ENCODE measurements at regions of chr4 and their contacts with region 1.

Region 1: DNA sequence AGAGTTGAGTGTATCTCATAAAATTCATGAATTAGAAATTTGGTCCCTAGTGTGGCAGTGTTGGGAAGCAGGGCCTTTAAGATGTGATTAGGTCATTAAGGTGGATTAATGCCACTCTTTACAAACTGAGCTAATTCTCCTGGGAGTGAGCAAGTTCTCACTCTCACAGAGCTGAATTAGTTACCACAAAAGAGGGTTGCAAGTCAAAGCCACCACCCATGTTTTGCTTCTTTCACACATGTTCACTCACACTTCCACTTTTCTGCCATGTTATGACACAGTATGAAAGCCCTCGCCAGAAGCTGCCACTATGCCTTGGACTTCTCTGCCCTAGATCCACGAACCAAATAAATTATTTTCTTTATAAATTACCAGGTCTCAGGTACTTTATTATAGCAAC is 332.1 kb downstream of the ARAP2 start:
- DNase-seq: peak; percentile 52
- ATAC-seq: peak; percentile 97
- H3K4me3 ChIP-seq: no peak overlapping the region
- H3K27ac ChIP-seq: no peak overlapping the region
- H3K4me1 ChIP-seq: no peaks in the 10 kb centered on the region
- H3K27me3 ChIP-seq: no peaks in the 10 kb centered on the region
- CTCF ChIP-seq: no peak
- EP300 ChIP-seq: peak in 1 of 2 experiments; percentile 64; a peak in 2 of 4 replicates
- POLR2A ChIP-seq: no peak
- RAD21 ChIP-seq: no peak

Region 2: GRCh38 chr4:35725131-35725530 is 187.0 kb before region 1 on chr4:
- CTCF ChIA-PET with region 1: interaction called, 6 read pairs
- POLR2A ChIA-PET with region 1: no interaction called
- RAD21 ChIA-PET with region 1: interaction called, 6 read pairs
- SMC1A ChIA-PET with region 1: interaction called, 8 read pairs
- in situ Hi-C with region 1: no loop called
- intact Hi-C with region 1: loop called (anchors 5 kb)
- DNase-seq: no peak
- ATAC-seq: peak; percentile 72
- H3K4me3 ChIP-seq: no peak overlapping the region
- H3K27ac ChIP-seq: no peak overlapping the region
- H3K4me1 ChIP-seq: no peaks in the 10 kb centered on the region
- H3K27me3 ChIP-seq: no peaks in the 10 kb centered on the region
- CTCF ChIP-seq: peak; percentile 14 to 39 (median 24); a peak in 3 of 6 replicates
- EP300 ChIP-seq: no peak
- POLR2A ChIP-seq: no peak
- RAD21 ChIP-seq: no peak

Region 3: DNA sequence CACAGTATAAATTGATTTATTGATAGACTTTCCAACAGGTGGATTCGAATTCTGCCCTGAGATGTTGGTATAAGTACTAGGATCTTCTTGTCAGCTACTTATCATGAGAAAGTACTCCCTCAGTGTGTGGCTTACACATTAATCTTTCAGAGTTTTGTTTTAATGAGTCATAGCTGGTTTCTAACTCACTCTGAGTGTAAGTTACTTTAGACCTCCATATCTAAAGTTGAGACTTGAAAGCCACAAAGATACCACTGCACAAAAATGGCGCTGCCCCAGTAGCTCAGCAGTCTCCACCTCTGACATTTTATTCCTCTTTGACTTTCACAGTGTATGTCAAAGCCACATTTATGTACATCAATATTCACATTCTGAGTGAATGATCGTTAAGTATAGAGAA is 13.6 kb after region 1 on chr4:
- CTCF ChIA-PET with region 1: interaction called, 4 read pairs
- POLR2A ChIA-PET with region 1: no interaction called
- RAD21 ChIA-PET with region 1: interaction called, 4 read pairs
- SMC1A ChIA-PET with region 1: interaction called, 9 read pairs
- in situ Hi-C with region 1: no loop called
- intact Hi-C with region 1: loop called (anchors 1 kb)
- DNase-seq: no peak
- ATAC-seq: peak; percentile 95
- H3K4me3 ChIP-seq: no peak overlapping the region
- H3K27ac ChIP-seq: no peak overlapping the region
- H3K4me1 ChIP-seq: no peaks in the 10 kb centered on the region
- H3K27me3 ChIP-seq: no peaks in the 10 kb centered on the region
- CTCF ChIP-seq: no peak
- EP300 ChIP-seq: no peak
- POLR2A ChIP-seq: no peak
- RAD21 ChIP-seq: no peak